Lower leg skin (tissue), 4 donors: ENCODE measurements at regions of chr1 and their contacts with region 1.

Region 1: DNA sequence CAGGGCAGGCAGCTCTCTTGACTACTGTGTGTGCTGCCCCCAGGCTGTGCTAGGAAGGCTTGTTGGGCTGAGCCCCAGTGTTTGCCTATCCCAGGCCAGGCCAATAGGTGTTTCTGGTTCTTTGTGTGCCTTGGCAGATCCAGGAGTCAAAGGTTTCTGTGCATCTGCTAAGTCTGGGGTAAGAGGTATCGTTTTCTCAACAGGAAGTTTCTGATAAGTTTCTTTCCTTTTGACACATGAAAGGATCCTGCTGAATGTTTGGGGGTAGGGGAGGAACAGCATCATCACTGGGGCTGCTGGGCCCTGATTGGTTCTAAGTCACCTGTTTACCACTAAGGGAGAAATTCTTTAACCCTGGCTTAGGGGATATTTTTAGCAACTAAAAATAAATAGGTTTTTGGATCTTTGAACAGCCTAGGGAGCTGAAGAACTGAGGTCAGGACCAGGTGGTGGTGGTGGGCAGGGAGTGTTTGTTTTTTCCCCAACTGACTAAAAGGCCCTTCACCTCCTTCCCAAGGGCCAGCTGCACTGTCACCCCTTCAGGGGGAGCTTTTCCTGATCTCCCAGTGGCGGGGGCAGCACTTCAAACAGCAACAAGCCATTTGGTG is 85.1 kb downstream of the KCNN3 start:
- DNase-seq: no peak
- H3K4me3 ChIP-seq: no peak overlapping the region
- CTCF ChIP-seq: no peak
- POLR2A ChIP-seq: no peak

Region 2: GRCh38 chr1:156060937-156061636 is 1276.1 kb after region 1 on chr1 and contains the start of gene RAB25:
- intact Hi-C with region 1: loop called (anchors 5 kb)
- DNase-seq: peak; percentile 62 to 90
- H3K4me3 ChIP-seq: peak within 1 kb of the TSS; percentile 0
- CTCF ChIP-seq: no peak
- POLR2A ChIP-seq: no peak
- total RNA-seq, gene RAB25: 211 to 281 (median 251) TPM